ENCODE measurements at regions of chr7 and their contacts with region 1.

Region 1: GRCh38 chr7:94004024-94004951 is at the start of gene BET1:
- DNase-seq: peak; percentile 97
- ATAC-seq: peak; percentile 100
- total RNA-seq, gene BET1: 17.0 to 17.1 TPM

Region 2: DNA sequence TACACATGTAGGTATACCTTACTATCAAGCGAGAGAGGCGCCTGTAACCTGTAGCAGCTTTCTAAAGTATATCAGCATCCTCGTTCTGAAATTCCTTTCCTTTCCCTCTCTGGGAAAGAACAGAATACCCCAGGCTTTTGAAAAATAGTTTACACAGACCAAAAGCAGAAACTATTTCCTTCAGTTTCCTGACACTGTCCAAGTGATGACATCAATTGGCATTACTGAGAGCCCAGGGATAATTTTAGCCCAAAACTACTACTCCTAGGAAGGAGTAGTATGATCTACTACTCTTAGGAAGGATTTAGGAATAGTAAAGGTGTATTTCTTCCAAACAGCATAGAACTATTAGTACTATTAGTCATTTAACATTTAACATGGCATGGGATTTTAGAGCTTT is 76.7 kb before region 1 on chr7:
- intact Hi-C with region 1: loop called in 1 of 2 experiments (anchors 5 kb)
- DNase-seq: no peak
- ATAC-seq: peak; percentile 49 to 57

Region 3: GRCh38 chr7:94276795-94277194 is 272.5 kb after region 1 on chr7:
- intact Hi-C with region 1: loop called in 1 of 2 experiments (anchors 10 kb)
- DNase-seq: no peak
- ATAC-seq: peak; percentile 77